GM12878 (cell line): ENCODE measurements at regions of chr14 and their contacts with region 1.

Region 1: GRCh38 chr14:61662437-61663311 is 32.6 kb upstream of the HIF1A start:
- DNase-seq: peak; percentile 100
- ATAC-seq: peak; percentile 87
- H3K4me3 ChIP-seq: peak overlapping the region; percentile 50
- H3K27ac ChIP-seq: peak overlapping the region; percentile 79
- H3K4me1 ChIP-seq: peaks cover 34% of the 10 kb centered on the region
- H3K27me3 ChIP-seq: no peaks in the 10 kb centered on the region
- CTCF ChIP-seq: 0 out of 6 replicates have a peak, but pooled peaks of 1 of the 3 experiments have one; percentile 13
- EP300 ChIP-seq: peak; percentile 73 to 93; a peak in 3 of 4 replicates
- POLR2A ChIP-seq: peak; percentile 82
- RAD21 ChIP-seq: peak; percentile 29; the same call in 1 of the 2 replicates

Region 2: DNA sequence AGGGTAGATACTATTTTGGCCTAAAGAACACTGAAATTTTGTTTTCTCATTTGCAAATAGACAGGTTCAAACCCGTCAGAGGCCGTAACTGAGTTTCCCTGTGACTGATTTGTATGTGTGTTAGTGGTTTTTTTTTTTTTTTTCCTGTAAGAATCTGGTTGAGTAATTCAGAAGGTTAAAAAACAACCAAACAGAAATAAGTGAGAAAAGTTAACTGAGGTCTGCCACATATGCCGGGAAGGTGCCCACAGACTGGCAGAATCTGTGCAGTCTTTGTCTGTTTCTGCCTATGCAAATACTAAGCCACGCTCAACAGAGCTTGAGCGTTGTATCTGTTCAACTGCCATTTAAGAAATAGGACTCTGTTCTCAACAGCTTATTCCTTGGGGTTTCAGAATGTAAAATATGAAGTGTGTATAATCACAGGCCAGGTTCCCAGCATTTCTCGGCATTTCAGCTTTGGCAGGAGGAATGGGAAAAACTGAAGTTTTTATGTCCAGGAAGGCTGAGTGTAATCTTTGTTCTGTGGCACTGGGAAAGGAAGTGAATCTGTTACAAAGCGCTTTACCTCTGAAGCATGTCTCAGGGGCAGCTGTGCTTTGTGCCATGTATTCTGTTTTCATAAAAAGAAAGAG is 159.4 kb before region 1 on chr14:
- CTCF ChIA-PET with region 1: interaction called, 5 read pairs
- POLR2A ChIA-PET with region 1: no interaction called
- RAD21 ChIA-PET with region 1: interaction called, 6 read pairs
- SMC1A ChIA-PET with region 1: interaction called, 13 read pairs
- in situ Hi-C with region 1: no loop called
- intact Hi-C with region 1: loop called (anchors 1 kb)
- DNase-seq: peak; percentile 94
- ATAC-seq: peak; percentile 93
- H3K4me3 ChIP-seq: peak overlapping the region; percentile 19; the same call in 1 of the 2 replicates
- H3K27ac ChIP-seq: peak overlapping the region; percentile 95
- H3K4me1 ChIP-seq: peaks cover 30% of the 10 kb centered on the region
- H3K27me3 ChIP-seq: no peaks in the 10 kb centered on the region
- CTCF ChIP-seq: no peak
- EP300 ChIP-seq: peak; percentile 30 to 87; a peak in 3 of 4 replicates
- POLR2A ChIP-seq: no peak
- RAD21 ChIP-seq: no peak

Region 3: DNA sequence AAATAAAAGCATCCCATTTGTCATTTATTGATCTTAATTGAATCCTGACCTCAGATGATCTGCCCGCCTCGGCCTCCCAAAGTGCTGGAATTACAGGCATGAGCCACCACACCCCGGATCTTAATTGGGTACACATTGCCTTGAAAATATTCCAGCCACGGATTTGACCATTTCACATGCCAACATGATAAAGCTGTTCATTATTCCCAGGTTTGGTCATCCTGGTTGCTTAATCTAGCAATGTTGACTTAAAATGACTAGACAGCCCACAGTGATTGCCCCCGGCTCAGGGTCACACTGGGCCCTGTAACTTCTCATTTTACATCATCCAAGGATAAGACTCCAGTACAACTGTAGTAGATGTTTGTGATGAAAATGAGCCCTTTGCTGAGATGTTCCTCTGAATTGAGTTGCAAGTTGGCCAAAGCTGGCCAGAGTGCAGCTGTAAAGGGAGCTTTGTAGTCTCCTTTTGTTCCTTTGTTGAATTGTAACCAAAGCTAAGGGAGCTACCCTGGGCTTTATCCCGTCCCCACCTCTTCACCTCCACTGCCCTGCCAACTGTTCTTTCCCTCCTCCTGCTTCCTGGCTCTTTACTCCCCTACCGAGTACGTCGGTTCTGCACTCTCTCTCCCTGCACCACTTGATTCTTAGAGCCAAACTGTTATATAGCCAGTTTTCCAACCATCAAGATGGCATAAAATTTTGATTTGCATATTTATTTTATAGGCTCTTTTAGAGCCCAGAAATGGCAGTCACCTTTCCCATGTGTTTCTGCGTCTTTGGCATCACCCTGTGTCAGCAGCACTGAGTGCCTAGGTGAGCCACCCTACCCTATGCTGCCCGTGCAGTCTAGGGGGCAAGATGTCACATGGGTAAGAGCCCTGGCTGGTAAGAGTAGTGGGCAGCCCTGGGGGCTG is 108.7 kb before region 1 on chr14:
- CTCF ChIA-PET with region 1: no interaction called
- POLR2A ChIA-PET with region 1: interaction called, 4 read pairs
- RAD21 ChIA-PET with region 1: interaction called, 4 read pairs
- SMC1A ChIA-PET with region 1: interaction called, 7 read pairs
- in situ Hi-C with region 1: no loop called
- intact Hi-C with region 1: loop called (anchors 5 kb)
- DNase-seq: no peak
- ATAC-seq: no peak
- H3K4me3 ChIP-seq: no peak overlapping the region
- H3K27ac ChIP-seq: no peak overlapping the region
- H3K4me1 ChIP-seq: peaks cover 15% of the 10 kb centered on the region
- H3K27me3 ChIP-seq: no peaks in the 10 kb centered on the region
- CTCF ChIP-seq: no peak
- EP300 ChIP-seq: no peak
- POLR2A ChIP-seq: no peak
- RAD21 ChIP-seq: no peak

Region 4: GRCh38 chr14:61703342-61704129 is 40.9 kb after region 1 on chr14:
- CTCF ChIA-PET with region 1: interaction called, 3 read pairs
- POLR2A ChIA-PET with region 1: interaction called, 8 read pairs
- RAD21 ChIA-PET with region 1: interaction called, 28 read pairs
- SMC1A ChIA-PET with region 1: interaction called, 53 read pairs
- in situ Hi-C with region 1: no loop called
- intact Hi-C with region 1: no loop called
- DNase-seq: no peak
- ATAC-seq: peak; percentile 54
- H3K4me3 ChIP-seq: 0 out of 2 replicates have a peak overlapping the region, but pooled peaks have one; percentile 18
- H3K27ac ChIP-seq: no peak overlapping the region; the same call in 1 of the 2 replicates
- H3K4me1 ChIP-seq: peaks cover 9% of the 10 kb centered on the region; the same call in 1 of the 2 replicates
- H3K27me3 ChIP-seq: no peaks in the 10 kb centered on the region
- CTCF ChIP-seq: no peak
- EP300 ChIP-seq: no peak
- POLR2A ChIP-seq: no peak
- RAD21 ChIP-seq: no peak

Region 5: DNA sequence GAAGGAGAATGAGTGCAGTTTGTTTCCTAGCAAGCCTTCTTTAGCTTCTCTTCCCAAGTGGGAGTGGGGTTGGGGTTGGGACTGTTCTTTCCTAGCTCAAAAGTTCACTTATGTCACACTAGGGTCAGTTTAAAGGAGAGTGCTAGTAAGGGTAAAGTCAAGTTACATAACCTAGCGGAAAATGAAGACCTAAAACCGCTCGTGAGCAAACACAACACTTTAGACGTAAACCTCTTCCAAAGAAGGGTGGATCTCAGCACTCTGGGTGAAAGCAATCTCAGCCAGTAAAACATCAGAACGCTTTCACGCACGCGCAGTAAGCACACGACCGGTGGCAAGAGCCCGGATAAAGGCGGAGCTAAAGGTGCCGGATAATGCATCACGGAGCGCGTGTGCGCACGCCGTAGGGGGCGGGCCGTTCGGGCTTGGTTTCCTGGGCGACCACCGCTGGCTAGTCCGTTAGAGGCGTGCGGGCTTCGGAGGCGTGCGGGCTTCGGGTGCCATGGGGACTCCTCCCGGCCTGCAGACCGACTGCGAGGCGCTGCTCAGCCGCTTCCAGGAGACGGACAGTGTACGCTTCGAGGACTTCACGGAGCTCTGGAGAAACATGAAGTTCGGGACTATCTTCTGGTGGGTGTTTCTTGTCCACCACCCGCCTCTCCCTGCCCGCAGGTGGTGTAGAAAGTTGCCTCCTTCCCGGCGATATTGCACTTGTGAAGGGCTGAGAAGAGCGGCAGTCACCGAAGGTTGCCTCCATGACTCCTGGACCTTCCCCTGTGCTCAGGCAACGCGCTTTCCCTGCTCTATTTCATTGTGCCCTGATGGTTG is 99.5 kb after region 1 on chr14 and contains the start of gene SNAPC1:
- CTCF ChIA-PET with region 1: no interaction called
- POLR2A ChIA-PET with region 1: no interaction called
- RAD21 ChIA-PET with region 1: no interaction called
- SMC1A ChIA-PET with region 1: no interaction called
- in situ Hi-C with region 1: no loop called
- intact Hi-C with region 1: loop called (anchors 5 kb)
- DNase-seq: peak; percentile 96
- ATAC-seq: peak; percentile 99
- H3K4me3 ChIP-seq: peak within 1 kb of the TSS; percentile 98
- H3K27ac ChIP-seq: peak within 1 kb of the TSS; percentile 87
- H3K4me1 ChIP-seq: no peaks in the 10 kb centered on the region; the same call in 1 of the 2 replicates
- H3K27me3 ChIP-seq: no peaks in the 10 kb centered on the region
- CTCF ChIP-seq: no peak
- EP300 ChIP-seq: no peak
- POLR2A ChIP-seq: peak; percentile 93
- RAD21 ChIP-seq: no peak
- polyA plus RNA-seq, gene SNAPC1: 5.2 to 7.0 TPM